ENCODE measurements at regions of chr2 and their contacts with region 1.

Region 1: DNA sequence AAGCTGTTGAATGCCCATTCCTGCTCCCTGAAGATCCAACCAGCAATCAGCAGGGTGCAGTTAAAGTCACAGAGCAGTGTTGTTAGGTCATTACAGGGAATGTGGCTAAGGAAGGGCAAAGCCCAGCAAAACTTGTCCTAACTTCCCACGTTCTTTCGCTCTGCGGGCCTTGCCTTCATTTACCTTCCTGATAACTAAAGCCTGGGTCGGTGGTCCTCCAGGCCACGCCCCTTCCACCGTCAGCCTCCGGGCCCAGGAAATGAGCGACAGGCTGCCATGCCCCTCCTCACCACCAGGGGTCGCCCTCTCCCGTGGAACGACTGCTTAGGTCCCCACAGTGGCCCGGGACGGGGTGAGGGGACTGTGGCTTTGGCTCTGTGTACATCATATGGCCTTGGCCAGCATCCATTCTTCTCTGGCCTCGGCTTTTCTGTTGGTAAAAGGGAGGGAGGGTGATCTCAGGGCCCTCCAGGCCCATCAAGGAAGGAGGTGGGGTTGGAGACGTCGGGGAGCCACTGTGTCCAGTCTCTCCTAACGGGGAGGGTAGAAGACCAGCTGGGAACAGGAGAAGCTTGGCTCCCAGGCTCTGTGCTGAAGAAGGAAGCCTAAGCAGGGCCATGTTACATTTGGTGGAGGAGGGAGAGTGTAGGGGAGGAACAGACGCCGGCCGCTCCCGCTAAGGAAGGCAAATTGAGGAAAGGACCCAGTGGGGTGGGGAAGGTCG is 2.2 kb downstream of the SH2D6 start:
- DNase-seq: peak; percentile 95
- ATAC-seq: peak; percentile 76
- H3K4me3 Mint-ChIP-seq: peak overlapping the region; percentile 78
- H3K27ac Mint-ChIP-seq: peak overlapping the region; percentile 80
- H3K4me1 Mint-ChIP-seq: peaks cover 25% of the 10 kb centered on the region
- H3K27me3 Mint-ChIP-seq: no peaks in the 10 kb centered on the region
- CTCF ChIP-seq: peak; percentile 90

Region 2: GRCh38 chr2:85106507-85107215 is 314.0 kb before region 1 on chr2:
- CTCF ChIA-PET with region 1: no interaction called
- POLR2A ChIA-PET with region 1: no interaction called
- intact Hi-C with region 1: no loop called
- DNase-seq: no peak
- ATAC-seq: no peak
- H3K4me3 Mint-ChIP-seq: no peak overlapping the region
- H3K27ac Mint-ChIP-seq: no peak overlapping the region
- H3K4me1 Mint-ChIP-seq: no peaks in the 10 kb centered on the region
- H3K27me3 Mint-ChIP-seq: peaks cover 3% of the 10 kb centered on the region
- CTCF ChIP-seq: no peak

Region 3: DNA sequence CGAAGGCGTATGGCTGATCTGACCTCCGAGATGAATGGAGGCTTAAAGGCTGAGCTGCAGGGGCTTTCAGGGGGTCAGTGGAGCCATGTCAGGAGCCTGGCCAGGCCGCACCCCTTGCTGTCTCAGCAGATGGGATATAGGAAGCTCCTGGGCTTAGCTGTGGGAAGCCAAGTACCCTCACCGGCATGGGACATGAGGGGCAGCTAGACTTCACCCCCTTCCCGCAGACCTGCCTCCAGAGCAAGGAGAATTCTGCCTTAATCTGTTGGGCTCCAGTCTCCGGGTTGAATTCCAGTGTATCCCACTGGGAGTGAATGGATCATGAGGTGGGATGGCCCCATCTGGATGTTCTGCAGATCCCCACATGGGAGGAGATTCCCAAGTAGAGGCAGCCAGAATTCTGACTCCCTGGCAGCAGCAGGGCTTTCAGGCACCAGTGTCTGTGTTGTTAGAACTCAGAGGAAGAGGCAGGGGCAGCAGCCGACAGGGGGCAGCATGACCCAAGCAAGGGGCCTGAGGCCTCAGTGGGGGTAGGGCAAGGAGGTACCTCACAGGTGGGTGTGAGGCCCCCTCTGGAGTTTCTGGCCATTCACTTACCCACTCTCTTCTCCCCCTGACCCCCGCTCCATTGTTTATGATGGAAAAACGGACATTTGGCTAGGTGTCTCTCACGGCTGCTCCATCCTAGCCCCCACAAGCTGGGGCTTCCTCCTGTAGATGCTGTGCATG is 29.6 kb before region 1 on chr2:
- CTCF ChIA-PET with region 1: interaction called, 17 read pairs
- POLR2A ChIA-PET with region 1: interaction called, 19 read pairs
- intact Hi-C with region 1: loop called (anchors 1 kb)
- DNase-seq: peak; percentile 69
- ATAC-seq: peak; percentile 22
- H3K4me3 Mint-ChIP-seq: no peak overlapping the region
- H3K27ac Mint-ChIP-seq: peak overlapping the region; percentile 81
- H3K4me1 Mint-ChIP-seq: peaks cover 30% of the 10 kb centered on the region
- H3K27me3 Mint-ChIP-seq: no peaks in the 10 kb centered on the region
- CTCF ChIP-seq: no peak

Region 4: GRCh38 chr2:85468704-85469349 is 48.1 kb after region 1 on chr2:
- CTCF ChIA-PET with region 1: no interaction called
- POLR2A ChIA-PET with region 1: no interaction called
- intact Hi-C with region 1: no loop called
- DNase-seq: no peak
- ATAC-seq: no peak
- H3K4me3 Mint-ChIP-seq: no peak overlapping the region
- H3K27ac Mint-ChIP-seq: no peak overlapping the region
- H3K4me1 Mint-ChIP-seq: peaks cover 9% of the 10 kb centered on the region
- H3K27me3 Mint-ChIP-seq: no peaks in the 10 kb centered on the region
- CTCF ChIP-seq: no peak

Region 5: GRCh38 chr2:85522090-85522647 is 101.5 kb after region 1 on chr2:
- CTCF ChIA-PET with region 1: no interaction called
- POLR2A ChIA-PET with region 1: interaction called, 10 read pairs
- intact Hi-C with region 1: no loop called
- DNase-seq: no peak
- ATAC-seq: no peak
- H3K4me3 Mint-ChIP-seq: no peak overlapping the region
- H3K27ac Mint-ChIP-seq: no peak overlapping the region
- H3K4me1 Mint-ChIP-seq: peaks cover 6% of the 10 kb centered on the region
- H3K27me3 Mint-ChIP-seq: peaks cover 6% of the 10 kb centered on the region
- CTCF ChIP-seq: no peak

Region 6: GRCh38 chr2:85561317-85561979 is 140.8 kb after region 1 on chr2 and contains the start of gene GGCX:
- CTCF ChIA-PET with region 1: interaction called, 162 read pairs
- POLR2A ChIA-PET with region 1: interaction called, 23 read pairs
- intact Hi-C with region 1: loop called (anchors 2 kb)
- DNase-seq: peak; percentile 84
- ATAC-seq: peak; percentile 88
- H3K4me3 Mint-ChIP-seq: peak within 1 kb of the TSS; percentile 98
- H3K27ac Mint-ChIP-seq: peak within 1 kb of the TSS; percentile 98
- H3K4me1 Mint-ChIP-seq: peaks cover 38% of the 10 kb centered on the region
- H3K27me3 Mint-ChIP-seq: no peaks in the 10 kb centered on the region
- CTCF ChIP-seq: no peak
- total RNA-seq, gene GGCX: 30.0 and 30.7 TPM in 2 replicates

Region 7: GRCh38 chr2:85602476-85603234 is 182.0 kb after region 1 on chr2 and contains the start of gene TMEM150A:
- CTCF ChIA-PET with region 1: interaction called, 7 read pairs
- POLR2A ChIA-PET with region 1: interaction called, 11 read pairs
- intact Hi-C with region 1: loop called (anchors 1 kb)
- DNase-seq: peak; percentile 91
- ATAC-seq: peak; percentile 97
- H3K4me3 Mint-ChIP-seq: peak within 1 kb of the TSS; percentile 90
- H3K27ac Mint-ChIP-seq: peak within 1 kb of the TSS; percentile 84
- H3K4me1 Mint-ChIP-seq: peaks cover 31% of the 10 kb centered on the region
- H3K27me3 Mint-ChIP-seq: no peaks in the 10 kb centered on the region
- CTCF ChIP-seq: no peak
- total RNA-seq, gene TMEM150A: 13.2 and 15.0 TPM in 2 replicates

Region 8: GRCh38 chr2:85707304-85707703 is 286.6 kb after region 1 on chr2:
- CTCF ChIA-PET with region 1: interaction called, 8 read pairs
- POLR2A ChIA-PET with region 1: interaction called, 7 read pairs
- intact Hi-C with region 1: loop called (anchors 1 kb)
- DNase-seq: no peak
- ATAC-seq: peak; percentile 66
- H3K4me3 Mint-ChIP-seq: no peak overlapping the region
- H3K27ac Mint-ChIP-seq: no peak overlapping the region
- H3K4me1 Mint-ChIP-seq: peaks cover 44% of the 10 kb centered on the region
- H3K27me3 Mint-ChIP-seq: peaks cover 4% of the 10 kb centered on the region
- CTCF ChIP-seq: peak; percentile 84

Region 9: DNA sequence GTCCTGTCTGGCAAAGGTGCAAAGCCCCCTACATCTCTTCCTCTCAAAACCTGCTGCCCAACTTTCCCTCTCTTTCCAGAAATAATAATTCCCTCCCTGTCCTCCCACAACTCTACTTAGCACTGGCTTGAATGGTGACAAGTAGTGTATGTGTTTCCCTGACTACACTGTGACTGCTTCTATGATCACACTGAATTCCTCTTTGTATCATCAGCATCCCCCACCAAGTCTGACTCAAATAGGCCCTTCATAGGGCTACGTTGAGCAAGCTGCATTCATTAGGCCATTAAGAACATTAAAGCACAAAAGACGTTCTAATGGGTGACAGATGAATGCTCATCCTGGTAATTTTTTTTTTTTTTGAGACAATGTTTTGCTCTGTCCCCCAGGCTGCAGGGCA is 481.8 kb after region 1 on chr2:
- CTCF ChIA-PET with region 1: no interaction called
- POLR2A ChIA-PET with region 1: no interaction called
- intact Hi-C with region 1: no loop called
- DNase-seq: no peak
- ATAC-seq: no peak
- H3K4me3 Mint-ChIP-seq: no peak overlapping the region
- H3K27ac Mint-ChIP-seq: no peak overlapping the region
- H3K4me1 Mint-ChIP-seq: peaks cover 8% of the 10 kb centered on the region
- H3K27me3 Mint-ChIP-seq: no peaks in the 10 kb centered on the region
- CTCF ChIP-seq: no peak

Region 10: DNA sequence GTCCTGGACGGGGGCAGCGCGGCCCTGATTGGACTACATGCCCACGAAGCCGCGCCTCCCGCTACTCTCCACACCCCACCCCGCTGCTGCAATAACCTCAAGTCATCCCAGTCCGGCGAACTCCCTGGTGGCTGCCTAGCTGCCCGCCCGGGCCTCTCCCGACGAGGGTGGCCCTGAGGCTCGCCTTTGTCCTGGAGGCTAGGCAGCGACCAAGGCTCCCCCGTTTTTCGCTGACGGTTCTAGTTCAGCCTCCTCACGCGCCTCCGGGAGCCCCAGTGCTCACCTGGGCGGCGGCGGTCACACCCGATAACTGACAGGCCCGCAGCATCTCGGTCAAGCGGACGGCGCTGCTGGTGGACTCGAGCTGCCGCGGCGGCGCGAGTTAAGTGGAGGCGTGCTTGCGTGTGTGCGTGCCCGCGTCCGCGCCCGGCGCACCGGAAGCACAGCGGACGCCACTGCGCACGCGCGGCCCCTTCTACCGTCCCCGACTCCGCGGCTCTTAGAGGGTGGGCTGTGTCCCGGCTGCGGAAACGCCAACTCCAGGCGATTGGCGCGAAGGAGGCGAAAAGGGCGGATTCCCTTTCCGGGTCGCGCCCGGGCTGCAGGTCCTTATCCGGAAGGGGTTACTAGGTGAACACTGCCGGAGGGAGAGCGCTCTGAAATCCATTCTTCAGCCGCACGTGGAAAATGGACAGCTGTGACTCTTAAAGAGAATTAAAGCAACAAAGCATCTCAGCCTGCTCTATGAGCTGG is 774.5 kb after region 1 on chr2 and contains the start of gene IMMT:
- CTCF ChIA-PET with region 1: no interaction called
- POLR2A ChIA-PET with region 1: no interaction called
- intact Hi-C with region 1: loop called (anchors 10 kb)
- DNase-seq: peak; percentile 86
- ATAC-seq: peak; percentile 91
- H3K4me3 Mint-ChIP-seq: peak within 1 kb of the TSS; percentile 91
- H3K27ac Mint-ChIP-seq: peak within 1 kb of the TSS; percentile 90
- H3K4me1 Mint-ChIP-seq: peaks cover 59% of the 10 kb centered on the region
- H3K27me3 Mint-ChIP-seq: no peaks in the 10 kb centered on the region
- CTCF ChIP-seq: no peak
- total RNA-seq, gene IMMT: 90.3 and 93.0 TPM in 2 replicates

Region 11: GRCh38 chr2:86398500-86399474 is 978.1 kb after region 1 on chr2:
- CTCF ChIA-PET with region 1: no interaction called
- POLR2A ChIA-PET with region 1: no interaction called
- intact Hi-C with region 1: no loop called
- DNase-seq: no peak
- ATAC-seq: no peak
- H3K4me3 Mint-ChIP-seq: no peak overlapping the region
- H3K27ac Mint-ChIP-seq: no peak overlapping the region
- H3K4me1 Mint-ChIP-seq: peaks cover 8% of the 10 kb centered on the region
- H3K27me3 Mint-ChIP-seq: peaks cover 10% of the 10 kb centered on the region
- CTCF ChIP-seq: no peak